ENCODE measurements at regions of chr15 and their contacts with region 1.

Region 1: GRCh38 chr15:75639709-75640482 is at the start of gene IMP3:
- DNase-seq: peak; percentile 95
- ATAC-seq: peak; percentile 90
- H3K4me3 ChIP-seq: peak within 1 kb of the TSS; percentile 95 to 97
- H3K27ac ChIP-seq: peak within 1 kb of the TSS; percentile 97
- H3K4me1 ChIP-seq: peaks cover 12 to 53% of the 10 kb centered on the region in 2 experiments
- H3K27me3 ChIP-seq: no peaks in the 10 kb centered on the region
- CTCF ChIP-seq: no peak
- POLR2A ChIP-seq: peak; percentile 97
- RAD21 ChIP-seq: no peak
- total RNA-seq, gene IMP3: 79.9 TPM

Region 2: GRCh38 chr15:75453703-75454470 is 186.0 kb before region 1 on chr15:
- CTCF ChIA-PET with region 1: interaction called, 11 read pairs
- POLR2A ChIA-PET with region 1: interaction called, 17 read pairs
- RAD21 ChIA-PET with region 1: interaction called in 1 of 2 experiments, 4 read pairs
- intact Hi-C with region 1: loop called (anchors 1 kb)
- DNase-seq: peak; percentile 100
- ATAC-seq: peak; percentile 41
- H3K4me3 ChIP-seq: peak overlapping the region; percentile 92 to 97
- H3K27ac ChIP-seq: peak overlapping the region; percentile 89
- H3K4me1 ChIP-seq: peaks cover 6 to 40% of the 10 kb centered on the region in 2 experiments
- H3K27me3 ChIP-seq: no peaks in the 10 kb centered on the region
- CTCF ChIP-seq: no peak
- POLR2A ChIP-seq: peak; percentile 35
- RAD21 ChIP-seq: no peak

Region 3: GRCh38 chr15:75508840-75509532 is 130.9 kb before region 1 on chr15:
- CTCF ChIA-PET with region 1: interaction called, 6 read pairs
- POLR2A ChIA-PET with region 1: no interaction called
- RAD21 ChIA-PET with region 1: no interaction called
- intact Hi-C with region 1: loop called (anchors 2 kb)
- DNase-seq: peak; percentile 32
- ATAC-seq: peak; percentile 70
- H3K4me3 ChIP-seq: no peak overlapping the region
- H3K27ac ChIP-seq: no peak overlapping the region
- H3K4me1 ChIP-seq: no peaks in the 10 kb centered on the region
- H3K27me3 ChIP-seq: no peaks in the 10 kb centered on the region
- CTCF ChIP-seq: peak; percentile 59 to 65 (median 64); a peak in 5 of 6 replicates
- POLR2A ChIP-seq: no peak
- RAD21 ChIP-seq: peak; percentile 67

Region 4: DNA sequence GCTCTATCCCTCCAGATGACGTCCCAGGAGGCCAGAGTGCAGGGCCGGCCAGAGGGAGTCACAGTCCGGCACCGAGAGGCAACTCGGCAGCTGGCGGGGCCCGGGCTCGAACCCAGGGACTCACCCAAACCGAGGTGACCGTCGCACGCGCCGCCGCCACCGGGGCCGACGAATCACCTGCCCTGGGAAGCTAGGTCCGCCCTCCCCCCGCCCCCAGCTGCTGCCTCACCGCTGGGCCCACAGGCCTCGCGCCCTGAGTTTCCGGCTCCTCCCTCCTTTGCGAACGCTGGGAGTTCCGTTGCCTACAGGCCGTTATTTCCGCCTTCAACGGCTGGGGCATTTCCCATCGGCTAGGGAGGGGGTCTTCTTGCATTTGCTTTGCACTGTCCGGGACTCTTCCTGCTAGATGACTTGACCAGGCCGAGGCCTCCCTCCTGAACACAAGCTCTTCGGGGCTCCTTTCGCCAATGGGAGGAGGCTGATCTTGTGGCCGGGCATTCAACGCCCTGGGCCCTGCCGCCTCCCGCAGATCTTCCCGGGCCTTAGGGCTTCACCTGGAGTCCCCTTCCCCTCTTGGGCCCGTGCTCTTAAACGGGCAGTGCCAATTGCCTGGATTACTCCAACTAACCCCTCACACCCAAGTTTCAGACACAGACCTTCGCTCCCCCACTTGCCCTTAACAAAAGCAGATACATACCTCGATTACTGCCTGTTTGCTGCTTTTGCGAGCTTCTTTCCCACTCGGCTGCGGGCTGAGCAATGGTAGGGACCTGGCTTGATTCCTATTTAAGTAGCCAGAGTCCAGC is 14.2 kb before region 1 on chr15 and contains the start of gene SNUPN:
- CTCF ChIA-PET with region 1: interaction called, 9 read pairs
- POLR2A ChIA-PET with region 1: interaction called, 35 read pairs
- RAD21 ChIA-PET with region 1: no interaction called
- intact Hi-C with region 1: loop called (anchors 2 kb)
- DNase-seq: peak; percentile 90
- ATAC-seq: peak; percentile 83
- H3K4me3 ChIP-seq: peak within 1 kb of the TSS; percentile 91 to 99
- H3K27ac ChIP-seq: peak within 1 kb of the TSS; percentile 99
- H3K4me1 ChIP-seq: peaks cover 16 to 40% of the 10 kb centered on the region in 2 experiments
- H3K27me3 ChIP-seq: no peaks in the 10 kb centered on the region
- CTCF ChIP-seq: no peak
- POLR2A ChIP-seq: peak; percentile 87
- RAD21 ChIP-seq: no peak
- total RNA-seq, gene SNUPN: 29.8 TPM

Region 5: DNA sequence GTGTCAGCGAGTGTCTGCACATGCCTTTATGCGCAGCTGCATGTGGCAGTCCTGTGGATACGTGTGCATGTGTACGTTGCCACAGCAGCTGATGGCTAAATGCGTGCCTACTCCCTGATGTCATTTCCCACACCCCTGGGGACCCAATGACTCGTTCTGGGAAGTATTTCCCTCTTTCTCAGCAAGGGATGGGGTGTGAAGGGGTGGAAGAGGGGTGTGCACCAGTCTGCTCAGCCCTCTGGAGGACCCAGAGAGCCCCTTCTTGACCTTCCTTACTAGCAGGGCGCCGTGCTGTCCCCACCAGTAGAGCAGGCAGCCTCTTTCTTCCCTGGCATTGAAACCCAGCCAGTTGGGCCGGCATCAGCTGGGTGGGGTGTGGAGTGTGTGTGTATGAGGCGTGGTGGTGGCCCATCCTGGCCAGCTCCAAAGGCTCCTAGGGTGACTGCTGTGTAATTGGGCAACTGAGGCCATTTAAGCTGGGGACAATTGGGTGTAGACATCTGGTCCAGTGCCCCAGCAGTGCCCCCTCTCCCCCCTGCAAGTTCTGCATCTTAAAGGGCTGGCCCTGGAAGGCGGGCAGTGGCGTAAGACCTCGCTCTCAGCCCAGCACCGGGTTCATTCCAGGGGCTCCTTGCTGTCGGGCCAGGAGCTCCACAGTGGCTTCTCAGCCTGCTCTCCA is 27.1 kb after region 1 on chr15:
- CTCF ChIA-PET with region 1: interaction called, 4 read pairs
- POLR2A ChIA-PET with region 1: interaction called, 10 read pairs
- RAD21 ChIA-PET with region 1: no interaction called
- intact Hi-C with region 1: no loop called
- DNase-seq: peak; percentile 91
- ATAC-seq: peak; percentile 62
- H3K4me3 ChIP-seq: peak overlapping the region in 1 of 2 experiments; percentile 13; a peak in 1 of 4 replicates
- H3K27ac ChIP-seq: peak overlapping the region; percentile 53
- H3K4me1 ChIP-seq: peaks cover 53 to 85% of the 10 kb centered on the region in 2 experiments
- H3K27me3 ChIP-seq: no peaks in the 10 kb centered on the region
- CTCF ChIP-seq: no peak
- POLR2A ChIP-seq: no peak
- RAD21 ChIP-seq: no peak

Region 6: GRCh38 chr15:76059320-76060117 is 419.6 kb after region 1 on chr15 and contains the start of gene TMEM266:
- CTCF ChIA-PET with region 1: no interaction called
- POLR2A ChIA-PET with region 1: no interaction called
- RAD21 ChIA-PET with region 1: no interaction called
- intact Hi-C with region 1: no loop called
- DNase-seq: no peak
- ATAC-seq: peak; percentile 76
- H3K4me3 ChIP-seq: peak within 1 kb of the TSS; percentile 46 to 59
- H3K27ac ChIP-seq: no peak within 1 kb of the TSS
- H3K4me1 ChIP-seq: peaks cover 9 to 30% of the 10 kb centered on the region in 2 experiments
- H3K27me3 ChIP-seq: peaks cover 22% of the 10 kb centered on the region
- CTCF ChIP-seq: no peak
- POLR2A ChIP-seq: no peak
- RAD21 ChIP-seq: no peak
- total RNA-seq, gene TMEM266: 0.91 TPM